Breast epithelium (tissue), 4 donors: ENCODE measurements at regions of chr6 and their contacts with region 1.

Region 1: GRCh38 chr6:130020907-130021629 is 2.7 kb downstream of the L3MBTL3 start:
- DNase-seq: peak; percentile 72 to 76
- H3K4me3 ChIP-seq: peak overlapping the region; percentile 84 to 99 (median 88)
- H3K27ac ChIP-seq: peak overlapping the region; percentile 82 to 97
- H3K4me1 ChIP-seq: no peaks in the 10 kb centered on the region
- H3K27me3 ChIP-seq: no peaks in the 10 kb centered on the region
- CTCF ChIP-seq: peak; percentile 69 to 81 (median 79)
- POLR2A ChIP-seq: no peak

Region 2: GRCh38 chr6:128641701-128642100 is 1379.4 kb before region 1 on chr6:
- intact Hi-C with region 1: loop called (anchors 10 kb)
- DNase-seq: no peak
- H3K4me3 ChIP-seq: no peak overlapping the region
- H3K27ac ChIP-seq: no peak overlapping the region
- H3K4me1 ChIP-seq: no peaks in the 10 kb centered on the region
- H3K27me3 ChIP-seq: no peaks in the 10 kb centered on the region
- CTCF ChIP-seq: no peak
- POLR2A ChIP-seq: no peak

Region 3: DNA sequence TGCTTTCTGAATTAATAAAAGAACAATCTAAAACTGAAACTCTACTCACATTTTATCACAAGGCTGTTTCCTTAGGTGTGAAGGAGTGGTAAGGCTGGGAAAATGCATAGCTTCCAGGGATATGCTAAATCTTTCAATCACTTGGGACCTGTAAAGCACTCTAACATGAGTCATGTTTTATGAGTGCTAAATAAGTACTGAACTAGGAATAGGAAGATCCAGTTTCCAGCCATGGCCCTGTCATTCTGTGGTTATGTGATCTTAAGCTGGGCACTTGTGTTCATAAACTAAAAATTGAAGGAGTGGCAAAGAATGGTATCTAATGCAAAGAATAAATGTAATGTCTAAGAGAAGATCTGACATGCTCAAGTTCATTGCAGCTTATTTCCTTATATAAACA is 338.7 kb after region 1 on chr6:
- intact Hi-C with region 1: no loop called
- DNase-seq: no peak
- H3K4me3 ChIP-seq: no peak overlapping the region
- H3K27ac ChIP-seq: no peak overlapping the region
- H3K4me1 ChIP-seq: no peaks in the 10 kb centered on the region
- H3K27me3 ChIP-seq: no peaks in the 10 kb centered on the region
- CTCF ChIP-seq: no peak
- POLR2A ChIP-seq: no peak

Region 4: DNA sequence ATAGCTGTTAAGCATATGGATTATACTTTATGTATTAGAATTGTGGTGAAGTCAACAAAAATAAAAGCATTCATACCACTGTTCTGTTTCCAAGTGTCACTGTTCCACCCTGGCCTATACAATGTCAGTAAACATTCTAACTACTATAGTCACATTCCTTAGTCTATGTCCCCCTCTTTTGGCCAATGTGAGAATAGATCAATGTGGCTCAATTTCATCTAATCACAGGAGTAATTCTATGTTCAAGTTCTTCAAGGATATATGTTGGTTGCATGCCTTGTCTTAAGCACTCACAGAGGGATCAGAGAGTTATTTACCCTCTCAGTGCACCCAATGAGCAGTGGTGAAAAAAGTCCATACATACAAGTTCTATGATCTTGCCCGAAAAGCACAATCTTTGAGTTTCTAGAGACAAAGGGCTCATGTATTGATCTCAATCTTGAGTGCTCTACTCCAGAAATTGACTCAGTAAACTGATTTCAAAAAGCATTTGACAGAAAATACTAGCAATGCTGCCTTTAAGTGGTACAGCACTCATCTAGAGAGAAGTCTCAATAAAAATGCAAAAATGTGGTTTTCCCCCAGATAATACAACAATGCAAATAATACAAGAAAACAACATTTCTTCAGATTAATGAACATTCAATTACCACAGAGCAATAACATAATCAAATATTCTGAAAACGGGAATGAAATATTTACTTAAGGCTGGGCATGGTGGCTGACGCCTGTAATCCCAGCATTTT is 822.7 kb after region 1 on chr6:
- intact Hi-C with region 1: loop called (anchors 5 kb)
- DNase-seq: no peak
- H3K4me3 ChIP-seq: no peak overlapping the region
- H3K27ac ChIP-seq: no peak overlapping the region
- H3K4me1 ChIP-seq: no peaks in the 10 kb centered on the region
- H3K27me3 ChIP-seq: no peaks in the 10 kb centered on the region
- CTCF ChIP-seq: peak in 2 of 3 donors; percentile 47 to 62
- POLR2A ChIP-seq: no peak